MCF 10A (cell line): ENCODE measurements at regions of chr13 and their contacts with region 1.

Region 1: DNA sequence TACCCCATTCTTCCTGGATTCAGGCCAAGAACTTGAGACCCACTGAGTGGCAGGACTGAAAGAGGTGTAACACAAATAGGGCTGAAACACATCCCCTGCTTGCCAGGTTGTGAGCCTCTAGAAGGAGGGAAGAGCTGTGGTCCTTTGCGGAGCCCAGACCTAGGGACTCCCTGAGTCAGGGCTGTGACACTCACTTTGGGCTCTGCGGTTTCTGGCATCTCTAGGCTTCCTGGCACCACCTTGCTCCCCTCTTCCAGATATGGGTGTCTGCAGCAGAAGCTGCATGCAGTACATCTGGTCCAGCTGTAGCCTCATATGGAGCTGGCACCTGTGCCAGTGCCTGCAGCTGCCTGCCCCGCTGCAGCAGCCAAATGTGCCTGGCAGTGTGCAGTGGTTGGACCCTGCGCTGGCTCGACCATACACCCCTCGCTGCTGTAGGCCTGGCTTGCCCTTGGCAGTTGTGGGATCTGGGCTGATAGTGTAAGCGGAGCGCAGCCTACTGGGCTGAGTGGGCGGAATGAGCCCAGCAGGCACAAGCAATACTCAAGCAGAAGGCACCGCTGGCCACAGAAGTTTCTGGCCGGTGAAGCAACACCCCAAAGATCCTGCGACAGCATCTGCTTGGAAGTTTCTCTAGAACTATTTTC is 290.4 kb downstream of the SLITRK6 start:
- DNase-seq: peak; percentile 56
- H3K4me3 Mint-ChIP-seq: no peak overlapping the region
- H3K27ac Mint-ChIP-seq: peak overlapping the region; percentile 77
- H3K4me1 Mint-ChIP-seq: peaks cover 26% of the 10 kb centered on the region
- H3K27me3 Mint-ChIP-seq: no peaks in the 10 kb centered on the region
- CTCF ChIP-seq: no peak

Region 2: GRCh38 chr13:85497652-85498051 is 11.2 kb before region 1 on chr13:
- CTCF ChIA-PET with region 1: no interaction called
- POLR2A ChIA-PET with region 1: interaction called, 15 read pairs
- intact Hi-C with region 1: no loop called
- DNase-seq: peak; percentile 84
- H3K4me3 Mint-ChIP-seq: no peak overlapping the region
- H3K27ac Mint-ChIP-seq: peak overlapping the region; percentile 46
- H3K4me1 Mint-ChIP-seq: peaks cover 16% of the 10 kb centered on the region
- H3K27me3 Mint-ChIP-seq: no peaks in the 10 kb centered on the region
- CTCF ChIP-seq: no peak